ENCODE measurements at regions of chr2 and their contacts with region 1.

Region 1: DNA sequence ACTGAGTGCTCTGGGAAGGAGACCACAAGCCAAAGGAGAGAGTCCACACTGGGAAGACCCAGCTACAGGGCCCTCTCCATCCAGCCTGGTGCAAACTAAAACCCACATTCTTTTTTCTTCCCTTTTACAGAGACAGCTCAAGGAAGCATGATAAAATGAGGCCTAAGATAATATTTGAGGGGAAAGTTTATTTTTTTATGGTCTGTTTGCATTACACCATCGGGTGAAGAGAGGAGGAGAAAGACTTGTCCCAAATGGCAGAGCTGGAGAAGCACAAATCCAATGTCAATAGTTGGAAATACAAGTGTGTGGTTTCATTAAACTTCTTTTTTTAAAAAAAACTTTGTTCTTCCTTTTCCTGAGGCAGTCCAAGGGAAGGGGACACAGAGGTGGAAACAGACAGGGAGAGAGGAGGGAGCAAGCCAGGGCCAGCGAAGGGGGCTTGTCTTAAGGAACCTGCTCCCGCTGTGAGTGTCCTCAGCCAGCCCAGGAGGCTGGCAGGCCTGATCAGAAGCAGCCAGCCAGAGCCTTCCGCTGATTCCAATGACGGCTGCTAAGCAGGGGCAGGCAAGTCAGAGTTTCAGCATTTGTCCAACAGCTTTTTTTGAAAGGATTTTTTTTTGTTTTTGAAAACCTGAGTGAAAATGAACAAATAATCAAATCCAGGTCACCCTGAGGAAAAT is 203.8 kb upstream of the SIX2 start:
- DNase-seq: no peak
- H3K4me3 ChIP-seq: no peak overlapping the region
- H3K4me3 Mint-ChIP-seq: no peak overlapping the region
- H3K27ac Mint-ChIP-seq: no peak overlapping the region
- H3K4me1 ChIP-seq: no peaks in the 10 kb centered on the region
- H3K4me1 Mint-ChIP-seq: peaks cover 7% of the 10 kb centered on the region
- H3K27me3 ChIP-seq: no peaks in the 10 kb centered on the region
- H3K27me3 Mint-ChIP-seq: no peaks in the 10 kb centered on the region
- CTCF ChIP-seq: no peak

Region 2: GRCh38 chr2:45192991-45193390 is 20.1 kb before region 1 on chr2:
- CTCF ChIA-PET with region 1: no interaction called
- POLR2A ChIA-PET with region 1: no interaction called
- intact Hi-C with region 1: loop called (anchors 1 kb)
- DNase-seq: no peak
- H3K4me3 ChIP-seq: no peak overlapping the region
- H3K4me3 Mint-ChIP-seq: no peak overlapping the region
- H3K27ac Mint-ChIP-seq: no peak overlapping the region
- H3K4me1 ChIP-seq: no peaks in the 10 kb centered on the region
- H3K4me1 Mint-ChIP-seq: no peaks in the 10 kb centered on the region
- H3K27me3 ChIP-seq: no peaks in the 10 kb centered on the region; the same call in none of the 2 replicates
- H3K27me3 Mint-ChIP-seq: peaks cover 10% of the 10 kb centered on the region
- CTCF ChIP-seq: no peak